ENCODE measurements at regions of chr9 and their contacts with region 1.

Region 1: DNA sequence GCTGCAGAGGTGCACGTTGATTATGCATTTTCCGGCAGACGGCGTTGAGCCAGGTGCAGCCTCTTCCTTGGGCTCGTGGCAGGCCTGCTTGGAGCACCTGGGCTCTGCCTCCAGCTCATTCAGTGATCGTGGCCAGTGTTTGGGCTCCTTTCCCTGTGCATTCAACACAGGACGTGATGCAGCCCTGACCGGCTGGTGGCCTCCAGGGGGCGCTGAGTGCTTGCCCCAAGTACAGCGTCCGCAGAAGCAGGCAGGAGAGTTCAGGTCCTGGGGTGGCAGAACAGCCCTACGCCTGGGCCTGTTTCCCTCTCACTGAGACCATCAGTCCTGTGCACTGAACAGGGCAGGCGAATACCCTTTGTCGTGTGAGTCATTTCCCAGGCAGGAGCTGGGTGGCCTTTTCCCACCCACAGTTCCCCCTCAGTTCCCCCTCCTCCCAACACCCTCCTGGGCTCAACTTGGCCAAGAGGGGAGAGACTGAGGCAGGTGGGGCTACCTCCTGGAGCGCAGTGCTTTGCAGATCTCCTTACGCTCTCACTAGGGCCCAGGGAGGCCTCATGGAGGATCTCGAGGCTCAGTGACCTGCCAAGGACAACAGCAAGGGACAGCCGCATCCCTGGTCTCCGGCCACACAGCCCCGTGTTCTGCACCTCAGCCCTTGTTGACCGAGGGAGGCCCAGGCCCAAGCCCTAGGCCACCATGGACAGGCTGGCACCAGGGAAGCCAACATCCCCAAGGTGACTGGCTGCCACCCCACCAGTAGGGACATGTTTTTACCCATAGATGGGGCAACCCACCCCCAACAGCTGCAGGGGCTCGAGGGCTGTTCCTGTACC is 52.9 kb downstream of the LRSAM1 start:
- DNase-seq: peak; percentile 88 to 91
- H3K4me3 ChIP-seq: no peak overlapping the region
- H3K27ac ChIP-seq: peak overlapping the region; percentile 60 to 64
- H3K4me1 ChIP-seq: peaks cover 0 to 17% (median 6%) of the 10 kb centered on the region in 4 donors
- H3K27me3 ChIP-seq: no peaks in the 10 kb centered on the region
- CTCF ChIP-seq: peak; percentile 83 to 91

Region 2: GRCh38 chr9:127199001-127199791 is 305.0 kb before region 1 on chr9:
- intact Hi-C with region 1: no loop called
- DNase-seq: peak; percentile 83 to 89
- H3K4me3 ChIP-seq: no peak overlapping the region
- H3K27ac ChIP-seq: peak overlapping the region; percentile 1 to 8
- H3K4me1 ChIP-seq: peaks cover 0 to 30% (median 19%) of the 10 kb centered on the region in 4 donors
- H3K27me3 ChIP-seq: no peaks in the 10 kb centered on the region
- CTCF ChIP-seq: peak; percentile 88 to 98

Region 3: GRCh38 chr9:127263664-127264063 is 240.5 kb before region 1 on chr9:
- intact Hi-C with region 1: no loop called
- DNase-seq: no peak
- H3K4me3 ChIP-seq: no peak overlapping the region
- H3K27ac ChIP-seq: peak overlapping the region; percentile 56 to 83
- H3K4me1 ChIP-seq: peaks cover 0 to 75% (median 39%) of the 10 kb centered on the region in 4 donors
- H3K27me3 ChIP-seq: no peaks in the 10 kb centered on the region
- CTCF ChIP-seq: no peak

Region 4: GRCh38 chr9:127723450-127723849 is 219.3 kb after region 1 on chr9:
- intact Hi-C with region 1: loop called (anchors 5 kb)
- DNase-seq: no peak
- H3K4me3 ChIP-seq: no peak overlapping the region
- H3K27ac ChIP-seq: no peak overlapping the region
- H3K4me1 ChIP-seq: peaks cover 0 to 11% (median 7%) of the 10 kb centered on the region in 4 donors
- H3K27me3 ChIP-seq: peaks cover 0 to 24% of the 10 kb centered on the region in 2 donors
- CTCF ChIP-seq: no peak

Region 5: DNA sequence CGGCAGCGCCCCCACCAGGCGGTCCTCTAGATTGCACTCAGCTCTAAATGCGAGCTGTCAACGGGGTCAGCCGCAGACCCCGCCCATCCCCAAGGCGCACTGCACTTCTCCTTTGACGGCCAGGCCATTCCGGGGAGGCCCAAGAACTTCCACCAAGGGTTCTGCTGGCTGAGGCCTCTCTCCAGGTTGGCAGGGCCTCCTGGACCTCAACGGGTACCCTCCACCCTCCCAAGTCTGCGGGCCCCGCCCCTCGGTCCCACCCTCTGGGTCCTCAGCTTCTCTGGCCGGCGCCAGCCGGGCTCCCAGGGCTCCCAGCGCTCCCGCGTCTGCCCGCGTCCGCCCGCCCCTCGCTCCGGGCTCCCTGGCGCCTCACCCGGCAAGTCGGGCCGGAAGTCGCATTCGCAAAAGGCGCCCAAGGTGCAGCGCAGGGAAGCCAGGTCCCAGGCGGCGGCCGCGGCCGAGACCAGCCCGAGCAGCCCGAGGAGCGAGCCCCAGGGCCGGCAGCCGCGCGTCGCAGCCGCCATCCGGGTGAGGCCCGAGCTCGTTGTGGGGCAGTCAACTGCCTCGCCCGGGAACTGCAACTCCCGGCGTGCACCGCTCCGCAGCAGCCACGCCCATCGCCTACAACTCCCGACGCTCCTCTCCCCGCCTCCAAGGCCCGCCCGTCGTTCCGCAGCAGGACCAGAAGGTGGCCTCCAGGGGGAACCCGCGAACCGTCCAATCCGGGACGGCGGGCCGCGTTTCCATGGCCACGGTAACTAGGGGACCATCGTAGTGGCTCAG is 230.8 kb after region 1 on chr9 and contains the start of gene TOR2A:
- intact Hi-C with region 1: no loop called
- DNase-seq: peak; percentile 94 to 98
- H3K4me3 ChIP-seq: peak within 1 kb of the TSS; percentile 69 to 75
- H3K27ac ChIP-seq: peak within 1 kb of the TSS; percentile 93
- H3K4me1 ChIP-seq: peaks cover 0 to 13% (median 7%) of the 10 kb centered on the region in 4 donors
- H3K27me3 ChIP-seq: no peaks in the 10 kb centered on the region
- CTCF ChIP-seq: peak; percentile 92 to 99

Measured in tibial artery (tissue), 4 donors.